ENCODE measurements at regions of chr4 and their contacts with region 1.

Region 1: DNA sequence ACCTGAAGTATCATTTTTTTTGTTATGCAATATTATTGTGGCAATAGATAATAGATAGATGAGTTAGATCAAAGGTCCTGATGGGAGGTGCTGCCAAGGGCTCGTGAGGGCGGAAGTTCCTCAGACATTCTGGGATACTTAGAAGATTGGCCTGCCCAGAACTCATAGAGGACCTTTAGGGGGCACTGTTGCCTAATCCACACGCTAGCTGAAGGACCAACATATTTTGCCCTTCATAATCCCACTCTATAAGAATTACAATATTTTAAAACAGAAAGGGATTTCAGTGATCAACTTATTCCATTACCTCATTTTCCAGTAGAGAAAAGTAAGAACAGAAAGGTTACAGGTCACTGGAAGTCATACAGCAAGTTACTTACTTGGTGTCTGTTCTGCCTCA is 22.9 kb upstream of the COX7B2 start:
- DNase-seq: no peak
- CTCF ChIP-seq: peak; percentile 42

Region 2: GRCh38 chr4:47032415-47033106 is 100.6 kb after region 1 on chr4:
- in situ Hi-C with region 1: loop called (anchors 25 kb)
- DNase-seq: peak; percentile 79
- CTCF ChIP-seq: peak; percentile 86

Region 3: DNA sequence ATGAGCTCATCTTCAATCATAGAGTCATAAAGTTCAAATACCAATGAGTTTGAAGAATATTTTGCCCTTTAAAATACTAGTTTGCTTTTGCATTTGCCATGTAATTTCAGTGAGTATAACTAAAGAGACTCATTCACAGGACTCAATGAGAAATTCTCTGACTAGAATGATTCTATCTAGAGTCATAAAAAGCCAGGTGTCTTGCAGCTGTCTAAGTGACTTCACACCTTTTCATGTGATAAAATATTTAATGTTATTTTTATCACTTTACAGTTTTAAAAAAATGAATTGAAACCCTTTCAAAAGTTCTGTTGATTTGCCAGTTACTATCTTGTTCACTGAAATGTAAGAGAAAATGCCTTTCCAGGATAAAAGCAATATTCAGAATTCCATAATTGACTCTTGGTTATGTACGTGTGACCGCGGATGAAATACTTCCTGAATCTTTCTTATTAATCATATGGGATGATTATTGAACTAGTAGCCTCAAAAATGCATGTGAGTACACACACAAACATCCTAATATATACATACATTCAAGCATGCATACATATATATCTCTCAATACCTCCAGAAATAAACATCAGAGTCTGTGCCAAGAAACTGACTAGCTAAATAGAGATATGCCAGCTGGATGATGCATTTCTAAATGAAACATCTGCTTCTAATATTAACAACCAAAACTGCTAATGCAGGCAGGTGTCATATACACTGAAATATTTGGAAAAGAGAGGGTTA is 186.4 kb after region 1 on chr4:
- in situ Hi-C with region 1: loop called (anchors 10 kb)
- DNase-seq: no peak
- CTCF ChIP-seq: no peak

Region 4: GRCh38 chr4:47463235-47463956 is 531.4 kb after region 1 on chr4 and contains the start of gene COMMD8:
- in situ Hi-C with region 1: no loop called
- DNase-seq: peak; percentile 94
- CTCF ChIP-seq: peak; percentile 35